ENCODE measurements at regions of chr9 and their contacts with region 1.

Region 1: DNA sequence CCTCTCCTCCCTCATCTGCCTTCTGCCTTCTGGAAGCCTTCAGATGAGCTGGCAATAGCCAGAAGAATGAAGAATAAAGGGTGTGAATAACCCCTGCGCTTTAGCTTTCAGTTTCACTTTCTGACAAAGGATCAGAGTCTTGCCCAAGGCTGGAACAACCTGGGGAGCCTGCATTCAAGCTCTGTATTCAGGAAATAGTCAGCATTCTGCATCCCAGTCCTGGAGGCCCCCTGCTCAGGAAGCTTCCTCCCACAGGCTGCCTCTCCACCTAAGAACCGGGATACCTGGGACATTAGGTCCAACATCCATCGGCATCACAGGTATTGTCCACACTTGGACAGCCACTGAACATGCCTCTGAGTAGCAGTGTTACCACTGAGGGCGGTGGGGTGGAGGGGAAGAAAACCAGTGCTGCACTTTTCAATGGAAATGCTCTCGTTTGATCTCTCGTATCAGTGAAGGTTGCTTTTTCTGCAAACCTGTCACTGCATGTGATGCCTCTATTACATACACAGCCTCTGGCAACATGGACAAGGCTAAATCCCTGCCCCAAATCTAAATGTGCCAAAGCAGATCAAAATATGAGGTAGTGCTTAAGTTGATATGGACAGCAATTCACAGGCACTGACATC is 39.8 kb upstream of the ACO1 start:
- DNase-seq: no peak
- H3K4me3 ChIP-seq: no peak overlapping the region
- H3K27ac ChIP-seq: no peak overlapping the region
- H3K4me1 ChIP-seq: no peaks in the 10 kb centered on the region
- H3K27me3 ChIP-seq: no peaks in the 10 kb centered on the region
- CTCF ChIP-seq: no peak

Region 2: GRCh38 chr9:32294106-32294505 is 50.6 kb before region 1 on chr9:
- intact Hi-C with region 1: loop called (anchors 5 kb)
- DNase-seq: no peak
- H3K4me3 ChIP-seq: no peak overlapping the region
- H3K27ac ChIP-seq: no peak overlapping the region
- H3K4me1 ChIP-seq: no peaks in the 10 kb centered on the region
- H3K27me3 ChIP-seq: no peaks in the 10 kb centered on the region
- CTCF ChIP-seq: no peak

Region 3: DNA sequence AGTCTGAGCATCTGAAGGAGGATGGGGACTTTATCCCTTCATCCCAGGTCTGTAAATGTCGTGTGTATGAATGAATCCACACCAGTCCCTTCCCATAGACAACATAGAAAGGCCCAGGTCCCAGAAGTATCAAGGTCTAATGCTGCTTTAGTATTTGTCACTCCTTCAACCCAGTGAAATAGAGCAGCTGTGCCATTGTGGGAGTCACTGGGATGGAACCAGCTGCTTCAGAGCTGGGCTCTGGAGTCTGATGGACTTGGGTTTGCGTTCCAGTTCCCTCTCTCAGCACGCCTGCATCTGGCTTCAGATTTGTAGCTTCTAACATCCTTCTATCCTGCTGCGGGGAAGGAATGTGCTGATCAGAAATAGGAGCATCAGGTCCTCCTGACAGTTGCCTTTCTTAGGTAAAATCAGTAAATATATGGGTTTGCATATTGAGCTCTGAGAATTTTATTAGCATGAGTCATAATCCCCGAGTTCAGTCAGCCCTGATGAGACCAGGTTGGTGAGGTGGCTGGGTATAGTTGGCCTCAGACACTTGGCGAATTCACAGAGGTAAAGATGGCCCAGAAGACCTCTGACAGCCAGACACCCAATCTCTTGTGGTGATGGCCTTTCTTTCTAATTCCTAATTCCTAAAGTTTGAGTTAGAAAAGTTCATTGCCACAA is 49.8 kb after region 1 on chr9:
- intact Hi-C with region 1: no loop called
- DNase-seq: no peak
- H3K4me3 ChIP-seq: no peak overlapping the region
- H3K27ac ChIP-seq: no peak overlapping the region
- H3K4me1 ChIP-seq: peaks cover 2 to 5% of the 10 kb centered on the region in 2 donors
- H3K27me3 ChIP-seq: no peaks in the 10 kb centered on the region
- CTCF ChIP-seq: no peak